Activated CD8-positive, alpha-beta T cell treated with anti-CD3 and anti-CD28 coated beads for 36 hours (primary cell): ENCODE measurements at regions of chr1 and their contacts with region 1.

Region 1: GRCh38 chr1:110780600-110781484 is 92.1 kb upstream of the CD53 start:
- DNase-seq: peak; percentile 85
- ATAC-seq: peak; percentile 80
- H3K4me3 Mint-ChIP-seq: peak overlapping the region; percentile 26
- H3K27ac Mint-ChIP-seq: no peak overlapping the region
- H3K4me1 Mint-ChIP-seq: peaks cover 33% of the 10 kb centered on the region
- H3K27me3 Mint-ChIP-seq: peaks cover 2% of the 10 kb centered on the region
- CTCF ChIP-seq: peak; percentile 79

Region 2: DNA sequence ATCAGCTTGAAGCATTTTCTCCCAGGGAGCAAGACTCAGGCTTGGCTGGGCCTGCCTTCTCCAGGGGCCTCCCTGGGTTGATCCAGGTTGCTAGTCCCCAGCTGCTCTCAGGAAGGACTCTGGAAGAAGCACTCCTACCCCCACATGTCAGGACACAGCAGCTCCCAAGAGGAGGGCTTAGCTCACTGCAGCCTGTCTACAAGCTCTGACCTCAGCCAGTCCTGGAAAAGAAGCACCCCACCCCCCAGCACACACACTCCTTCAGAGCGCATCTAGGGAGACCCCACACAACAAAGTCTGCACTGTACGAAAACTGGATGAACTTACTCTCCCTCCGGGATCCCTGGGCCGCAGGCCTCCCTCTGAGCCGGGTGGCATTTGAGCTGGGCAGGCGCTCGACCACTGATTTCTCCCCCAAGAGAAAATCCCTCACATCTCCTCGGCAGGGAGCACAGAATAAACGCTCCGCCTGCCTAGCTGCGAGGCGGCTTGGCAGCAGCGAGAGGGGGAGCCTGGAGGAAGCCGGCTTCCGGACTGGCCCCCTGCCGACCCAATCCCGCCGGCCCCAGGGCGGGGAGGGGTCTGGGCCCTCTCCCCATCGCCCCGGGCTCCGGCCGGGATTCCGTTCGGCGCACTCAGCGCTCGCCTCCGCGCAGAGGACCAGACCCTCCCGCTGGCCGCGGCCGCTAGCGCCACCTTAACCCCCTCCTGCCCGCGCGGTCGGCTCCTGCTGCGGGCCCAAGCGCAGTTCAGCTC is 174.8 kb before region 1 on chr1 and contains the start of gene KCNA2:
- CTCF ChIA-PET with region 1: interaction called, 43 read pairs
- POLR2A ChIA-PET with region 1: interaction called, 3 read pairs
- intact Hi-C with region 1: no loop called
- DNase-seq: no peak
- ATAC-seq: peak; percentile 40
- H3K4me3 Mint-ChIP-seq: peak within 1 kb of the TSS; percentile 68
- H3K27ac Mint-ChIP-seq: no peak within 1 kb of the TSS
- H3K4me1 Mint-ChIP-seq: peaks cover 5% of the 10 kb centered on the region
- H3K27me3 Mint-ChIP-seq: peaks cover 44% of the 10 kb centered on the region
- CTCF ChIP-seq: no peak
- total RNA-seq, gene KCNA2: 0.02 to 0.14 TPM

Region 3: DNA sequence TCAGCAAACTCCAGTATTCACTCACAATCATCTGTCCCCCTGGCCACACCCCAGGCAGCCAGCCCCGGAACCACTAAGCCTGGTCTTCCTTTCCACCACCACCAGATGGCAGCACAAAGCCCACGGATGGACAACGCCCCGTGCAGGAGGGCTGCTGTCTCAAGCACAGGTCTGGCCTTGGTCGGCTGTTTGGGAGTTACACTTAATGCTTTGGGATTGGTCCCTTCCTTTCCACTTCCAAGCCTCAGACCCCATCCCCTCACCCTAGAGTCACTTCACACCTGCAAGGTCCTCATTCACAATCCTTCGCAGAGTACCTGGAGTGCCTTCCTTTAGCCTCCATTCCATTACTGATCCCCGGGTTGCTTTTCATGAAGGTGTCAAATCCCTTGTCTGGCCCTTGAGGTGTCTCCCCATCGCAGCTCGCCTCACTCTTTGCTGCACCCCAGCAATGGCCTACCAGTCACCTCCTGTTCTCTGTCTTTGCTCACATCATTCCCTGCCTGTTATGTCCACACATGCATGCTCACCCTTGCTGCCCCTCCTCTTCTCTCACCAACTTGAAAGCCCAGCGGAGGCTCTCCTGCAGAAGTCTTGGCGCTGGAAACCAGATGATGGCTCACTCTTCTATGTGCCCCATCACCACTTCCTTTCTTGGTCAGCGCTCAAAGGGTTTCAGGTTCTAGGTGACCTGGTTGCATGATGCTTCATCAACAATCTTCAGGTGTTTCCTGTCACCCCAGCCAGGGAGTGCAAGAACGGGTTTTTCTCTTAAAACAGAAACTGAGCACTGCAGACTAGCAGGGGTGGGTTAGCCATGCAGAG is 149.8 kb before region 1 on chr1:
- CTCF ChIA-PET with region 1: interaction called, 45 read pairs
- POLR2A ChIA-PET with region 1: interaction called, 3 read pairs
- intact Hi-C with region 1: no loop called
- DNase-seq: peak; percentile 89
- ATAC-seq: peak; percentile 69
- H3K4me3 Mint-ChIP-seq: no peak overlapping the region
- H3K27ac Mint-ChIP-seq: no peak overlapping the region
- H3K4me1 Mint-ChIP-seq: peaks cover 52% of the 10 kb centered on the region
- H3K27me3 Mint-ChIP-seq: no peaks in the 10 kb centered on the region
- CTCF ChIP-seq: peak; percentile 85

Region 4: GRCh38 chr1:110798691-110799256 is 17.9 kb after region 1 on chr1:
- CTCF ChIA-PET with region 1: interaction called, 14 read pairs
- POLR2A ChIA-PET with region 1: no interaction called
- intact Hi-C with region 1: no loop called
- DNase-seq: no peak
- ATAC-seq: no peak
- H3K4me3 Mint-ChIP-seq: no peak overlapping the region
- H3K27ac Mint-ChIP-seq: no peak overlapping the region
- H3K4me1 Mint-ChIP-seq: no peaks in the 10 kb centered on the region
- H3K27me3 Mint-ChIP-seq: no peaks in the 10 kb centered on the region
- CTCF ChIP-seq: no peak

Region 5: GRCh38 chr1:110918016-110918415 is 137.2 kb after region 1 on chr1:
- CTCF ChIA-PET with region 1: no interaction called
- POLR2A ChIA-PET with region 1: no interaction called
- intact Hi-C with region 1: no loop called
- DNase-seq: no peak
- ATAC-seq: no peak
- H3K4me3 Mint-ChIP-seq: no peak overlapping the region
- H3K27ac Mint-ChIP-seq: no peak overlapping the region
- H3K4me1 Mint-ChIP-seq: peaks cover 16% of the 10 kb centered on the region
- H3K27me3 Mint-ChIP-seq: peaks cover 2% of the 10 kb centered on the region
- CTCF ChIP-seq: no peak

Region 6: GRCh38 chr1:110986407-110986891 is 205.6 kb after region 1 on chr1:
- CTCF ChIA-PET with region 1: interaction called, 27 read pairs
- POLR2A ChIA-PET with region 1: no interaction called
- intact Hi-C with region 1: loop called (anchors 5 kb)
- DNase-seq: no peak
- ATAC-seq: no peak
- H3K4me3 Mint-ChIP-seq: no peak overlapping the region
- H3K27ac Mint-ChIP-seq: no peak overlapping the region
- H3K4me1 Mint-ChIP-seq: peaks cover 11% of the 10 kb centered on the region
- H3K27me3 Mint-ChIP-seq: peaks cover 4% of the 10 kb centered on the region
- CTCF ChIP-seq: no peak